ENCODE measurements at regions of chr1 and their contacts with region 1.

Region 1: DNA sequence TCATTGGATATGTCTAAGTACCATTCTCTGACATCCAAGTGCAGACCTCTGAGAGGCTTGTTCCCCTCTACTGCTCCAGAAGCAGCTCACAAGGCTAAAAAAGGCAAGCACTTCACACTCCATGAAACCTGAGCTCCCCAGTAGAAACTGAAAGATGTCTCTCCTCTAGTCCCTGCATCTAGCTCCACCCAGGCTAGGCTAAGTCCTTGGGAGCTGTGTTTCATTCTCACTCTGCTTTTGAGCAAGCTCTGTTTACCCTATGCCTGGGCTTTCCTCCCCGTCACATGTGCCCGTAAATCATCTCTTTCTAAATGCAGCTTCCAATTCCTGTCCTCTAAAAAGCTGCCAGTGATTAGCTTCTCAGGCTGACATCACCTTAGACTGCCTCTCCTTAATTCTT is 39.0 kb downstream of the LRRC71 start:
- DNase-seq: no peak
- H3K4me3 Mint-ChIP-seq: no peak overlapping the region
- H3K27ac Mint-ChIP-seq: no peak overlapping the region
- H3K4me1 Mint-ChIP-seq: peaks cover 43% of the 10 kb centered on the region
- H3K27me3 Mint-ChIP-seq: peaks cover 4% of the 10 kb centered on the region

Region 2: GRCh38 chr1:156970017-156970416 is 10.6 kb after region 1 on chr1:
- CTCF ChIA-PET with region 1: interaction called, 12 read pairs
- POLR2A ChIA-PET with region 1: no interaction called
- DNase-seq: no peak
- H3K4me3 Mint-ChIP-seq: no peak overlapping the region
- H3K27ac Mint-ChIP-seq: no peak overlapping the region
- H3K4me1 Mint-ChIP-seq: no peaks in the 10 kb centered on the region
- H3K27me3 Mint-ChIP-seq: peaks cover 52% of the 10 kb centered on the region